Activated naive CD4-positive, alpha-beta T cell treated with anti-CD3 and anti-CD28 coated beads for 36 hours (primary cell): ENCODE measurements at regions of chr21 and their contacts with region 1.

Region 1: DNA sequence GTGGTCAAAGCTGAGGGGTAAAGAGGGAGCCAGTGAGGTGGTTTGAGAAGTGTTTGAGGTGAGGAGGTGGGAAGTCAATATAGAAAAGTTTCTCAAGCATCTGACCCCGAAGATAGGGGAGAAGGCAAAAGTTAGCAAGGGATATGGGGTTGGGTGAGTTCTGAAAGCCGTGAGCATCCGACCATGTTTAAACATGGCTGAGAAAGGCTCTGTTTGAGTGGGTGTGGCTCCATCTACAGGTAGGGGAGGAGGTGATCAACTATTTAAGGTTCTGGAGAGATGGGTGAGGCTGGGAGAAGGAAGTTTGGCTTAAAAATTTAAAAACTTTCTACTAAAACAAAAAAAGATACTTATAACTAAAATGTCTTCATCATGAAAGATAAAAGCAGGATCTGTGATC is 273.8 kb downstream of the KCNJ6 start:
- DNase-seq: peak; percentile 66
- H3K4me3 Mint-ChIP-seq: no peak overlapping the region
- H3K27ac Mint-ChIP-seq: no peak overlapping the region
- H3K4me1 Mint-ChIP-seq: peaks cover 2% of the 10 kb centered on the region
- H3K27me3 Mint-ChIP-seq: peaks cover 19% of the 10 kb centered on the region

Region 2: DNA sequence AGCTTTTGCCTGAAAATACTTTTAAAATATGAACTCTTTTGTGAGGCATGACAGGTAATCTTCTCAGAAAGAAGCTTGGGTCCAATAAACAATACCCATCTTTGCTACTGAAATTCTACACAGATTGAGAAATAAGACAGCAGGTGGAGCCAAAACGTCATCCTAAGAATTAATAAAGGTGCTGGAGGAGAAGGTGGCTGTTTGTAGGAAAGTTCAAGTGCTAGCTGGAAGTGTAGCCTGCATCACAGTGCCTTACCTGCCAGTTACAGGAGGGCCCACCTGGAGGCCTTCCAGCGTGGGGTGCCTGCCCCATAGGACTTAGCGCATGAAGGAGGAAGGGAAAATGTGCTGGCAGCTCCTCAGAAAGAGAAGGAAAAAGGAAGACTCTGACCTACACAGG is 475.8 kb before region 1 on chr21:
- CTCF ChIA-PET with region 1: no interaction called
- intact Hi-C with region 1: loop called (anchors 1 kb)
- DNase-seq: peak; percentile 9
- H3K4me3 Mint-ChIP-seq: no peak overlapping the region
- H3K27ac Mint-ChIP-seq: no peak overlapping the region
- H3K4me1 Mint-ChIP-seq: no peaks in the 10 kb centered on the region
- H3K27me3 Mint-ChIP-seq: no peaks in the 10 kb centered on the region

Region 3: GRCh38 chr21:37563641-37564340 is 78.7 kb before region 1 on chr21:
- CTCF ChIA-PET with region 1: interaction called, 9 read pairs
- intact Hi-C with region 1: loop called (anchors 1 kb)
- DNase-seq: peak; percentile 92
- H3K4me3 Mint-ChIP-seq: peak overlapping the region; percentile 88
- H3K27ac Mint-ChIP-seq: peak overlapping the region; percentile 99
- H3K4me1 Mint-ChIP-seq: peaks cover 20% of the 10 kb centered on the region
- H3K27me3 Mint-ChIP-seq: no peaks in the 10 kb centered on the region

Region 4: GRCh38 chr21:37582590-37582989 is 59.9 kb before region 1 on chr21:
- CTCF ChIA-PET with region 1: no interaction called
- intact Hi-C with region 1: no loop called
- DNase-seq: peak; percentile 35
- H3K4me3 Mint-ChIP-seq: no peak overlapping the region
- H3K27ac Mint-ChIP-seq: peak overlapping the region; percentile 19
- H3K4me1 Mint-ChIP-seq: peaks cover 6% of the 10 kb centered on the region
- H3K27me3 Mint-ChIP-seq: peaks cover 5% of the 10 kb centered on the region